MCF 10A (cell line): ENCODE measurements at regions of chr19 and their contacts with region 1.

Region 1: GRCh38 chr19:13150187-13150930 is at the starts of genes IER2 and STX10:
- DNase-seq: peak; percentile 97
- H3K4me3 Mint-ChIP-seq: peak within 1 kb of the TSS; percentile 82
- H3K27ac Mint-ChIP-seq: peak within 1 kb of the TSS; percentile 92
- H3K4me1 Mint-ChIP-seq: peaks cover 11% of the 10 kb centered on the region
- H3K27me3 Mint-ChIP-seq: no peaks in the 10 kb centered on the region
- CTCF ChIP-seq: peak; percentile 25
- total RNA-seq, gene IER2: 63.0 and 92.3 TPM in 2 replicates
- total RNA-seq, gene STX10: 35.2 and 37.9 TPM in 2 replicates

Region 2: DNA sequence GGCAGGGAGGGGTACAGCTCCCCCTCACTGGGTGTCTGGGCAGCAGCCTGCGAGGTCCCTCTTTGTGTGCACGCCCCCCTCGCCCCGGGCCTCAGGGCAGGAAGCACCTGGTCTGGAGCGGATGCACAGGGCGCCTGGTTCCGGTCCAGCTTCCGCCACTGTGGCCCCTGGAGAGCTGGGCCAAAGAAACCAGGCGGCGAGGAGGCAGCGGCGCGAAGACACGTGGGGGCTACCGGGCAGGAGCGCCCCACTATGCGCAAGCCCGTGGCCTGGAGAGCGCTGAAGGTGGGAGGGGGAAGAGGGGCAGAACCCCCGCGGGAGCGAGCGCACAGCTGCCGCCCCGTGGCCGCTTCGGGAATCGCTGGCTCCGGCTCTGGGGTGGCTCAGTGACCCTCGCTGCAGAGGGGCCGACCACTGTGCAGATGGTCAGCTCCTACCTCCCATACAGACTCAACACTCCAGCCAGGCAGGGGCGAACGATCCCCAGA is 46.0 kb before region 1 on chr19:
- CTCF ChIA-PET with region 1: no interaction called
- POLR2A ChIA-PET with region 1: no interaction called
- intact Hi-C with region 1: no loop called
- DNase-seq: no peak
- H3K4me3 Mint-ChIP-seq: no peak overlapping the region
- H3K27ac Mint-ChIP-seq: no peak overlapping the region
- H3K4me1 Mint-ChIP-seq: no peaks in the 10 kb centered on the region
- H3K27me3 Mint-ChIP-seq: no peaks in the 10 kb centered on the region
- CTCF ChIP-seq: no peak

Region 3: DNA sequence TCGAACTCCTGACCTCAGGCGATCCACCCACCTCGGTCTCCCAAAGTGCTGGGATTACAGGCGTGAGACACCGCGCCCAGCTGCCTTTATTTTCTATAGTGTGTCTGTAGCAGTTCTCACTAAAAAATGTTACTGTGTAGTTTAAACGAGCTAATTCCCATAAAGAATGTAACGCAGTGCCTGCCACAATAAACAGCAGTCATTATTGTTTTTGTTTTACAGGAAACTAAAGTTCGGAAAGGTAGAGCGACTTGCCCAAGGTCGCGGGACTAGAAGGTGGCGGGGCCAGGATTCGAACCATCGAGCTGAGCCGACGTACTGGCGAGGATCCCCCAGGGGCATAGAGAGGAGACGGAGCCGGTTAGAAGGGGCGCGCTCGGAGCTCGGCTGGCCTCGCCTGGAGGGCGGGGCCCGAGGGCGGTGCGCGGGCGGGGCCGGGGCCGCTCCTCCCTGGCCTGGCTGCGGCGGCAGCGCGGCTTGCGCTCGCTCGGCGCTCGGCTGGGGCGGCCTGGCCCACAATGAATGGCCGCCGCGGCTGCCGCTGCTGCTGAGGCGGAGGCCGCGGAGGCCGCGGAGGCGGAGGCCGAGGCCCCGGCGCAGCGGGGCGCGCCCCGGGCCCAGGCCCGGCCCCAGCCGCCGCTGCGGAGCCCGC is 32.5 kb before region 1 on chr19 and contains the start of gene NACC1:
- CTCF ChIA-PET with region 1: interaction called, 3 read pairs
- POLR2A ChIA-PET with region 1: interaction called, 61 read pairs
- intact Hi-C with region 1: loop called (anchors 2 kb)
- DNase-seq: peak; percentile 90
- H3K4me3 Mint-ChIP-seq: peak within 1 kb of the TSS; percentile 98
- H3K27ac Mint-ChIP-seq: peak within 1 kb of the TSS; percentile 98
- H3K4me1 Mint-ChIP-seq: peaks cover 30% of the 10 kb centered on the region
- H3K27me3 Mint-ChIP-seq: no peaks in the 10 kb centered on the region
- CTCF ChIP-seq: no peak
- total RNA-seq, gene NACC1: 55.9 and 67.3 TPM in 2 replicates

Region 4: GRCh38 chr19:13162518-13163314 is 12.4 kb after region 1 on chr19:
- CTCF ChIA-PET with region 1: interaction called, 6 read pairs
- POLR2A ChIA-PET with region 1: interaction called, 101 read pairs
- intact Hi-C with region 1: loop called (anchors 1 kb)
- DNase-seq: peak; percentile 99
- H3K4me3 Mint-ChIP-seq: peak overlapping the region; percentile 62
- H3K27ac Mint-ChIP-seq: peak overlapping the region; percentile 85
- H3K4me1 Mint-ChIP-seq: peaks cover 22% of the 10 kb centered on the region
- H3K27me3 Mint-ChIP-seq: no peaks in the 10 kb centered on the region
- CTCF ChIP-seq: no peak

Region 5: GRCh38 chr19:13169810-13170209 is 19.5 kb after region 1 on chr19:
- CTCF ChIA-PET with region 1: interaction called, 3 read pairs
- POLR2A ChIA-PET with region 1: interaction called, 101 read pairs
- intact Hi-C with region 1: loop called (anchors 1 kb)
- DNase-seq: peak; percentile 84
- H3K4me3 Mint-ChIP-seq: no peak overlapping the region
- H3K27ac Mint-ChIP-seq: no peak overlapping the region
- H3K4me1 Mint-ChIP-seq: peaks cover 29% of the 10 kb centered on the region
- H3K27me3 Mint-ChIP-seq: no peaks in the 10 kb centered on the region
- CTCF ChIP-seq: no peak

Region 6: DNA sequence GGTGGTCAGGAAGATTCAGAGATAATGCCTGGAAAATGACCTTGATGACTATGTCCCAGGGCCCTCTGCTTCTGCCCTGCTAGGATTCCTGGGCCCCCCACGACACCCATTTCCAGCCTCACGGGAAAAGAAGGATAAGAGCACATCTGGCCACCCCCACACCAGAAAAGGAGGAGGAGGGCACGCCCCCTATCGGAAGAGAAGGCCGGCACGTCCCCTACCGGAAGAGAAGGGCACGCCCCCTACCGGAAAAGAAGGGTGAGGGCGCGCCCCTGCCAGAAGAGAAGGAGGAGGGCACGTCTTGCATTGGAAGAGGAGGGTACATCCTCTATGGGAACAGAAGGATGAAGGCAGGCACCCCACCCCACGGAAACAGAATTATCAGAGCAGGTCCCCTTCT is 84.2 kb after region 1 on chr19:
- CTCF ChIA-PET with region 1: no interaction called
- POLR2A ChIA-PET with region 1: no interaction called
- intact Hi-C with region 1: loop called (anchors 10 kb)
- DNase-seq: peak; percentile 78
- H3K4me3 Mint-ChIP-seq: no peak overlapping the region
- H3K27ac Mint-ChIP-seq: no peak overlapping the region
- H3K4me1 Mint-ChIP-seq: no peaks in the 10 kb centered on the region
- H3K27me3 Mint-ChIP-seq: peaks cover 33% of the 10 kb centered on the region
- CTCF ChIP-seq: peak; percentile 46

Region 7: GRCh38 chr19:13262450-13262849 is 112.1 kb after region 1 on chr19:
- CTCF ChIA-PET with region 1: interaction called, 10 read pairs
- POLR2A ChIA-PET with region 1: interaction called, 12 read pairs
- intact Hi-C with region 1: loop called (anchors 1 kb)
- DNase-seq: peak; percentile 64
- H3K4me3 Mint-ChIP-seq: no peak overlapping the region
- H3K27ac Mint-ChIP-seq: no peak overlapping the region
- H3K4me1 Mint-ChIP-seq: peaks cover 11% of the 10 kb centered on the region
- H3K27me3 Mint-ChIP-seq: peaks cover 30% of the 10 kb centered on the region
- CTCF ChIP-seq: peak; percentile 54